Activated naive CD4-positive, alpha-beta T cell treated with anti-CD3 and anti-CD28 coated beads for 36 hours (primary cell): ENCODE measurements at regions of chr11 and their contacts with region 1.

Region 1: GRCh38 chr11:3091791-3092602 is 34.8 kb upstream of the CARS1 start:
- DNase-seq: peak; percentile 78
- H3K4me3 Mint-ChIP-seq: no peak overlapping the region
- H3K27ac Mint-ChIP-seq: no peak overlapping the region
- H3K4me1 Mint-ChIP-seq: no peaks in the 10 kb centered on the region
- H3K27me3 Mint-ChIP-seq: no peaks in the 10 kb centered on the region

Region 2: GRCh38 chr11:2892215-2893020 is 199.6 kb before region 1 on chr11:
- CTCF ChIA-PET with region 1: interaction called, 8 read pairs
- intact Hi-C with region 1: loop called (anchors 1 kb)
- DNase-seq: peak; percentile 79
- H3K4me3 Mint-ChIP-seq: peak overlapping the region; percentile 84
- H3K27ac Mint-ChIP-seq: peak overlapping the region; percentile 80
- H3K4me1 Mint-ChIP-seq: peaks cover 16% of the 10 kb centered on the region
- H3K27me3 Mint-ChIP-seq: no peaks in the 10 kb centered on the region

Region 3: GRCh38 chr11:2930704-2931428 is 161.1 kb before region 1 on chr11:
- CTCF ChIA-PET with region 1: interaction called, 17 read pairs
- intact Hi-C with region 1: loop called (anchors 1 kb)
- DNase-seq: peak; percentile 83
- H3K4me3 Mint-ChIP-seq: peak overlapping the region; percentile 66
- H3K27ac Mint-ChIP-seq: peak overlapping the region; percentile 72
- H3K4me1 Mint-ChIP-seq: peaks cover 24% of the 10 kb centered on the region
- H3K27me3 Mint-ChIP-seq: peaks cover 20% of the 10 kb centered on the region

Region 4: DNA sequence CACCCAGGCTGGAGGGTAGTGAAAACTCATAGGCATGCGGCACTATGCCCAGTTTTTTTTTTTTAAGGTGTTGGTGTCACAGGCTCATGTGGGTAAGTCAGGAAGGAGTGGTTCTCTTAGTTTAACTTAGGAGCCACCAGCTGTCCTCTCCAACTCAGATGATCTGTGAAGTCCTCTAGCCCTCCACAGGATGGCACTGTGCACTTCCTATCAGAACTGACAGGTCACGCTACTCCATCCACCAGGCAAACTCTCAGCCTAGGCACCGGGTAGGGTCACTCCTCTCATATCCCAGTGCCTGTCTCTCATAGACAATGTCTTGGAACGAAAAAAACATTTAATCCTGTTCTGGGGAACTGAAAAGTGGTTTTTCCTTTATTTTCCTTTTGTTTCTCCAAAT is 116.4 kb before region 1 on chr11:
- CTCF ChIA-PET with region 1: interaction called, 19 read pairs
- intact Hi-C with region 1: no loop called
- DNase-seq: peak; percentile 65
- H3K4me3 Mint-ChIP-seq: no peak overlapping the region
- H3K27ac Mint-ChIP-seq: peak overlapping the region; percentile 25
- H3K4me1 Mint-ChIP-seq: peaks cover 26% of the 10 kb centered on the region
- H3K27me3 Mint-ChIP-seq: no peaks in the 10 kb centered on the region

Region 5: GRCh38 chr11:3021125-3021524 is 70.9 kb before region 1 on chr11:
- CTCF ChIA-PET with region 1: interaction called, 8 read pairs
- intact Hi-C with region 1: loop called (anchors 5 kb)
- DNase-seq: peak; percentile 46
- H3K4me3 Mint-ChIP-seq: no peak overlapping the region
- H3K27ac Mint-ChIP-seq: no peak overlapping the region
- H3K4me1 Mint-ChIP-seq: peaks cover 38% of the 10 kb centered on the region
- H3K27me3 Mint-ChIP-seq: no peaks in the 10 kb centered on the region

Region 6: DNA sequence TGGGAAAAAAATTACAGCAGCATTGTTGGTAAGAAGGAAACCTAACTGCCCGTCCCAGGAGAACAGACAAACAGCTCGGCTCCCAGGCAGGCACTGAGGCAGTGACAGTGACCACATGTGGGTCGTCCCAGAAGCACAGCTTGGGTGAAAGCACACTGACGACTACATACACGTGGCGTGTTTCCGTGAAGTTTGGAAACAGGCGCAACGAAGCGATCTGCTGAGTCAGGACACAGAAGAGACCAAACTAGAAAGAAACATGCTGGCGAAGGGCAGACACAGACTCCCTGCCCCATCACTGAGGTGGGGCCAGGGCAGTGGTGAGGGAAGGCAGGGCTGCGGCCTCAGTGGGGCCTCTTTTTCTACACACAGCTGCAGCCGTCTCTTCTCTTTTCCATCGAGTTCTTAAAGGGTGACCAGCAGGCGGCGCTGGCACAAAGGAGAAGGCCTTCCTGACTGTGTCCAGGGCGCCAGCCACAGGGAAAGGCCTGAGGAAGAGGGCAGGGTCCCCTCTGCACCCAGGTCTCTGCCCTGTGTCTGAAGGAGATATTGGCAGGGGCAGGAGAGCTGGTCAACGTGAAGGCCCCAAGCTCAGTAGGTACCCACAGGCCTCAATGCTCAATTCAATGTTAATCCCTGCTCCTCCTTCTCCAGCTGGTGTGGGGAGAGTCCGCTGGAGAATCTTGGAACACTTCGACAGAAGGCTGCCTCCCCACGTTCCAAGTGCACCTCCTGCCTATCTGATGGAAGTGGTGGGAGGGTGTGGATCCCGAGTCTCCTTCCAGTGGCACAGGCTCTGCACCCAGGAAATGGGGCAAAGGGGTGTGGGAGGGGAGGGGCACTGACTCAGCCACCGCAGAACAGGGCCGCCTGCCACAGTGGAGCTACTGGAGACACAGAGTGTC is 54.7 kb before region 1 on chr11:
- CTCF ChIA-PET with region 1: interaction called, 30 read pairs
- intact Hi-C with region 1: loop called (anchors 1 kb)
- DNase-seq: peak; percentile 58
- H3K4me3 Mint-ChIP-seq: no peak overlapping the region
- H3K27ac Mint-ChIP-seq: no peak overlapping the region
- H3K4me1 Mint-ChIP-seq: peaks cover 9% of the 10 kb centered on the region
- H3K27me3 Mint-ChIP-seq: no peaks in the 10 kb centered on the region